Activated CD8-positive, alpha-beta T cell treated with anti-CD3 and anti-CD28 coated beads for 36 hours (primary cell): ENCODE measurements at regions of chr2 and their contacts with region 1.

Region 1: GRCh38 chr2:231800493-231801091 is 14.3 kb downstream of the COPS7B start:
- DNase-seq: peak; percentile 75
- ATAC-seq: peak; percentile 81
- H3K4me3 Mint-ChIP-seq: no peak overlapping the region
- H3K27ac Mint-ChIP-seq: no peak overlapping the region
- H3K4me1 Mint-ChIP-seq: peaks cover 2% of the 10 kb centered on the region
- H3K27me3 Mint-ChIP-seq: no peaks in the 10 kb centered on the region
- CTCF ChIP-seq: peak; percentile 81

Region 2: GRCh38 chr2:231786177-231786916 is 14.2 kb before region 1 on chr2 and contains the start of gene COPS7B:
- CTCF ChIA-PET with region 1: interaction called, 14 read pairs
- POLR2A ChIA-PET with region 1: interaction called, 12 read pairs
- intact Hi-C with region 1: no loop called
- DNase-seq: peak; percentile 92
- ATAC-seq: peak; percentile 59
- H3K4me3 Mint-ChIP-seq: peak within 1 kb of the TSS; percentile 81
- H3K27ac Mint-ChIP-seq: peak within 1 kb of the TSS; percentile 90
- H3K4me1 Mint-ChIP-seq: peaks cover 56% of the 10 kb centered on the region
- H3K27me3 Mint-ChIP-seq: no peaks in the 10 kb centered on the region
- CTCF ChIP-seq: peak; percentile 52
- total RNA-seq, gene COPS7B: 51.3 to 53.6 TPM

Region 3: DNA sequence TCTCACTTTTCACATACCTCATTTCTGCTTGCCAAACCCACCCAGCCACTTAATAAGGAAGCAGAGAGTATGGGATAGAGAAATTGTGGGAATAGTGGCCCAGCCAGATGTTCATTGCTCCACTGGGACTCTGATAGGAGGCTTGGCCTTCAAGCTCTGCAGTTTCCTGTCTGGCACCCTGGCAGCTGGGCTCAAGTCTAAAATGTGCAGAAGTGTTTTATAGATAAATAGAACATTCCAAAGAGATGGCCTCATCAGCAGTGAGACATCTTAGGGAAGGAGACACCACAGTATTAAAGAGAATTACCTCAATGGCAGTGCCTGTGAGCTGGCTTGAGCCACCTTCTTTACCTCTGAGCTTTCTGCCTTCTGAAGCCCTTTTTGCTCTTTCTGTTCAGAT is 10.3 kb after region 1 on chr2:
- CTCF ChIA-PET with region 1: interaction called, 11 read pairs
- POLR2A ChIA-PET with region 1: interaction called, 3 read pairs
- intact Hi-C with region 1: no loop called
- DNase-seq: no peak
- ATAC-seq: no peak
- H3K4me3 Mint-ChIP-seq: no peak overlapping the region
- H3K27ac Mint-ChIP-seq: no peak overlapping the region
- H3K4me1 Mint-ChIP-seq: no peaks in the 10 kb centered on the region
- H3K27me3 Mint-ChIP-seq: no peaks in the 10 kb centered on the region
- CTCF ChIP-seq: no peak